ENCODE measurements at regions of chr6 and their contacts with region 1.

Region 1: GRCh38 chr6:25223490-25223991 is 55.6 kb upstream of the CARMIL1 start:
- DNase-seq: peak; percentile 80
- H3K4me3 Mint-ChIP-seq: peak overlapping the region; percentile 47
- H3K27ac Mint-ChIP-seq: no peak overlapping the region
- H3K4me1 Mint-ChIP-seq: peaks cover 8% of the 10 kb centered on the region
- H3K27me3 Mint-ChIP-seq: peaks cover 2% of the 10 kb centered on the region

Region 2: DNA sequence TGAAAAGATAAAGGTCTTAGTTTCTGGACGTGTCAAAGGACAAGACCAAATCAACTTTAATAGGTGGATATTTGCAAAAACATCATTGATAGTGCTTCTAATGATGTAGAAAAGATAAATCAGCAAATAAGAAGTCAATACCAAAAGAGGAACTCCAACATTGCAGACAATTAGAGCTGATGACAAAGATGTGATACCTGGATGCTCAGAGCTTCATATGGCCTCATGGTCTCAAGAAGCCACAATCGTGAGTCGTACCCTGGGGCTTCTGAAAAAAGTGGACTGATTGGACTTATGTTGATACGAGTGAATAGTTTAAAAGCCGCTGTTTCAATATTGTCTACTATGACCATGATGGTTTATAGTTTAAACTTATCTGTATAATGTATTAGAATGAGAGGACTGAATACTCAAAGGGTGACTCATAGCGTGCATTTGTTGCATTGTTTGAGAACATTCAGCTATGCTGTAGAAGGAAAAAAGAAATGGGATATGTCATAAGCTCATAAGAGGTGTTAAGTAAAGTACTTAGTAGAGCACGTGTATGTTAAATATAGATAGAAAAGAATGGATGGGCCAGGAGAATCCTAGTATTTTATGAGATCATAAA is 233.2 kb before region 1 on chr6:
- CTCF ChIA-PET with region 1: no interaction called
- intact Hi-C with region 1: no loop called
- DNase-seq: no peak
- H3K4me3 Mint-ChIP-seq: no peak overlapping the region
- H3K27ac Mint-ChIP-seq: peak overlapping the region; percentile 86
- H3K4me1 Mint-ChIP-seq: peaks cover 72% of the 10 kb centered on the region
- H3K27me3 Mint-ChIP-seq: no peaks in the 10 kb centered on the region

Region 3: GRCh38 chr6:25188234-25188633 is 35.3 kb before region 1 on chr6:
- CTCF ChIA-PET with region 1: no interaction called
- intact Hi-C with region 1: no loop called
- DNase-seq: no peak
- H3K4me3 Mint-ChIP-seq: no peak overlapping the region
- H3K27ac Mint-ChIP-seq: no peak overlapping the region
- H3K4me1 Mint-ChIP-seq: peaks cover 5% of the 10 kb centered on the region
- H3K27me3 Mint-ChIP-seq: peaks cover 15% of the 10 kb centered on the region

Region 4: DNA sequence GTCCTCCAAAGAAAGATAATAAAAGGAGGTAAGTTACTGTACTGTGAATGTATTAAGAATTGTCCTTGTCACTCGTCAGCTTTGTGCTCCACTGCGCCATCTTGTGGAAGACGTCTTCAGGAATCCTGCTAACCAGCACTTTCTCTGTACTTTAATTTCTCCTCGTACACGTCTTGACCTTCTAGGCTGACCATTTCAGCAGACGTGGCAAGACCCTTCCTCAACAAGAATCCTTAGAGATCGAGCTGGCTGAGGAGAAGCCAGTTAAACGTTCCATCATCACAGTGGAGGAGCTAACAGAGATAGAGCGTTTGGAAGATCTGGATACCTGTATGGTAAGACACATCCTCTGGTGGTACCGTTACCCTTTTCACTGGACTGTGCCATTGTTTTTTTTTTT is 333.0 kb after region 1 on chr6:
- CTCF ChIA-PET with region 1: interaction called, 18 read pairs
- intact Hi-C with region 1: loop called (anchors 1 kb)
- DNase-seq: peak; percentile 92
- H3K4me3 Mint-ChIP-seq: no peak overlapping the region
- H3K27ac Mint-ChIP-seq: no peak overlapping the region
- H3K4me1 Mint-ChIP-seq: no peaks in the 10 kb centered on the region
- H3K27me3 Mint-ChIP-seq: no peaks in the 10 kb centered on the region

Region 5: DNA sequence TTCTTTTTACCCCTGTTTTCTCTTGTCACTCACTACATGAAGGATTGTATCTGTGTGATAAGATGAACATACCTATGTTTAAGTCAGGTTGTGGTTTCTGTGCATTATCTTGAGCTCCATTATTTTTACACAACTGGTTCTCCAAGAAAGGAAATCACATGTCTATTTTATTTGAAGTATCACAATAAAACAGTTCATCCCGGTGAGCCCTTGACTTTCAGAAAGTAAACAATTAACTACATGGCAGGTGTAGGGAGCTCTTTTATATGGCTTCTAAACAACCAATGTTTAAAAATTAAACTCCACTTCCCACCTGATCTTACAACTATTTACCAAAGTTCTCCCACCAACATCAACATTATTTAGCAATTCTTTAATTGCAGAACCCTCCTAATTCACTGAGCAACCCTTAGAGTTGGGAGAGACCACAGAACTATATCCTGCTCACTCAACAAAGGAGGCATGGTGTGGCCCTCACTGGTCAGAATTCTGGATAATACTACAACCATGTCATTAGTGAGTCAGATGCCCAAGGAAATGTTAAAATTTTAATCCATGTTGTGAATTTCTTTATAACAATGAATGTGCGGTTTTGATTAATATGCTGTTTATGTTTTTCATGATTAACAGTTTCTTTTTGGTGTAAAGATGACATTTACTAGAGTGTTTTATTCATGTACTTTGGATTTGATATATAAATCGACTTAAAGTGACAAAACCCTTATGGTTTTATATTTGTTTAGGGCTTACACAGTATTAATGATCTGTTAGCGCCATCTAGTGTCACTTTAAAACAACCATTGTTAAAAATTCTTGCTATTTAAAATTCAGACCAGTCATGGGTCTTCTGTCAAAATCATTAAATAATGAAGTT is 378.5 kb after region 1 on chr6:
- CTCF ChIA-PET with region 1: interaction called, 6 read pairs
- intact Hi-C with region 1: loop called (anchors 1 kb)
- DNase-seq: no peak
- H3K4me3 Mint-ChIP-seq: no peak overlapping the region
- H3K27ac Mint-ChIP-seq: no peak overlapping the region
- H3K4me1 Mint-ChIP-seq: peaks cover 6% of the 10 kb centered on the region
- H3K27me3 Mint-ChIP-seq: no peaks in the 10 kb centered on the region

Region 6: DNA sequence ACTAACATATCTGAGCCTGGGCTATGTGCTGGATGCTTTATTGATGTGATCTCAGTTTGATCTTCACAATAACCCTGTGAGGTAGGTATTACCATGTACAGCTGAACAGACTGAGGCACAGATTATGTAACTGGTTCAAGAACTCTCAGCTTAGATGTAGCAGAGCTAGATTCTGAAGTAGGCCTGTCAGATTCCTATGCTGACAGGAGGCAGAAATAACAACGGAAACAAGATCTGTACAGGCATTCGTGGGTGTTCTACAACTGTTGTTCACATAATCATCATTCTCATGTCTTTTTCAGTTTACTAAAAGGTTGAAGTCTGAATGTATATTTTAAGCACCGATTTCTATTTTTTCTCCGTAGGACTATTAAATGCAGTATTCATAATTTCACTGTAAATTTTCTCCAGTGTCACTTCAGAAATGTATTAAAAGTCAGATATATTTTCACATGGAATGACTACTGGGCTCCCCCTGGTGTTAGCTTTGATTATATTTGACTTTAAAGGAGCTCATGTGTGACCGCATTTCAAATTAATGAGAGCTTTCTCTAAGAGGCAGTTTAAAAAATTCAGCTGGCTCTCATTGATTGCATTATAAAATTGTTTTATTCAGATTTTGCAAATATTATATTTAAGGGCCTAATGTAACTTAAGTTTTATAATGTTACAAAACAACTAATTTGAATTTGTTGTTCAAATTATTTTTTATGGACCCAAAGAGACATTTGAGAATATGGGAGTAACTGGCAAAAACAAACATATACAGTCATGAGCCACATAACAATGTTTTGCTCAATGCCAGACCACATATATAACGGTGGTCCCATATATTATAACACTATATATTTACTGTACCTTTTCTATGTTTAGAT is 494.6 kb after region 1 on chr6:
- CTCF ChIA-PET with region 1: interaction called, 3 read pairs
- intact Hi-C with region 1: loop called (anchors 2 kb)
- DNase-seq: no peak
- H3K4me3 Mint-ChIP-seq: no peak overlapping the region
- H3K27ac Mint-ChIP-seq: no peak overlapping the region
- H3K4me1 Mint-ChIP-seq: no peaks in the 10 kb centered on the region
- H3K27me3 Mint-ChIP-seq: peaks cover 9% of the 10 kb centered on the region

Region 7: GRCh38 chr6:26021369-26022185 is 798.0 kb after region 1 on chr6:
- CTCF ChIA-PET with region 1: no interaction called
- intact Hi-C with region 1: no loop called
- DNase-seq: peak; percentile 98
- H3K4me3 Mint-ChIP-seq: peak overlapping the region; percentile 96
- H3K27ac Mint-ChIP-seq: peak overlapping the region; percentile 100
- H3K4me1 Mint-ChIP-seq: peaks cover 34% of the 10 kb centered on the region
- H3K27me3 Mint-ChIP-seq: no peaks in the 10 kb centered on the region

Measured in activated naive CD4-positive, alpha-beta T cell treated with anti-CD3 and anti-CD28 coated beads for 36 hours (primary cell).